ENCODE measurements at regions of chr4 and their contacts with region 1.

Region 1: DNA sequence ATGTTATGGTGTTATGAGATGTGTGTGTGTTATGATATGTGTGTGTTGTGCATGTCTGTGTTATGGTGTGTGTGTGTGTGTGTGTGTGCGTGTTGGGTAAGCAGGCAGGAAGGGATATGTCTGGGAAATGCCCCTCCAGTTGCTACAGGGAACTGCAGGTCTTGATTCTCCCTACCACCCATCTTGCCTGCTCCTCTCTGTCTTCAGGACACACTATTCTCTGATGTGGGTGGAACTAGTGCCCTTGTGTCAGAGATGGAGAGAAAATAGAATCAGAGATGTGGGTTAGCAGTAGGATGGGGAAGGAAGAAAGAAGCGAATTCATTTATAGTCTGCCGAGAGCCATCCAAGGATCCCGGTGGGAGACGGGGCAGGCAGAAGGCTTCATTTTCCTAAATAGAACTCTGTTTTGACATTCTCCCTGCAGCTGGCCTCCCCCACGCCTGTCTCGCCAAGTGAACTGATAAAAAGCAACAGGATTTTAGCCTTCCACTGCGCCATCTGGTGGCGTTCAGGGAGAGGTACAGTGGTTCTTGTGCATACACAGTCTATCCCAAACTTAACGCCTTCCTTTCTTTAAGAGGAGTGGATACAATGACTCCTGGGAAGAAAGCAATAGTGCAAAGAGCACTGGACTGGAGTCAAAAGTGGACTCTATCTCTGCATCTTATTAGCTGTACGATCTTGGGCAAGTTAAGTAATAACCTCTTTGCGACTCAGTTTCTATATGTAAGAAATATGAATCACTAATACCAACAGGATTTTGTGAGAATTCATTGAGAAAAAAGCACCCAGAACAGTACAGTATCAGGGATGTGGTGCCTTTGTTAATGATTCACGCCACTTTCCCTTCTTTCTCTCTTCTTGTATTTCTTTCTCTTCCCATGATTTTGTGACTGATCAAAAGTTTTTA is 14.1 kb upstream of the MGST2 start:
- DNase-seq: peak in 1 of 2 experiments; percentile 79
- H3K4me3 ChIP-seq: no peak overlapping the region
- H3K27ac ChIP-seq: no peak overlapping the region
- H3K4me1 ChIP-seq: no peaks in the 10 kb centered on the region; a peak in 1 of 7 replicates
- H3K27me3 ChIP-seq: no peaks in the 10 kb centered on the region; a peak in 1 of 7 replicates
- CTCF ChIP-seq: peak; percentile 64 to 92 (median 91)
- EP300 ChIP-seq: no peak
- POLR2A ChIP-seq: no peak
- RAD21 ChIP-seq: peak; percentile 77 to 82

Region 2: GRCh38 chr4:139331185-139331584 is 320.4 kb before region 1 on chr4:
- CTCF ChIA-PET with region 1: no interaction called
- POLR2A ChIA-PET with region 1: no interaction called
- DNase-seq: no peak
- H3K4me3 ChIP-seq: no peak overlapping the region
- H3K27ac ChIP-seq: no peak overlapping the region
- H3K4me1 ChIP-seq: peaks cover 0 to 6% (median 2%) of the 10 kb centered on the region in 4 experiments; a peak in 3 of 7 replicates
- H3K27me3 ChIP-seq: no peaks in the 10 kb centered on the region
- CTCF ChIP-seq: no peak
- EP300 ChIP-seq: no peak
- POLR2A ChIP-seq: no peak
- RAD21 ChIP-seq: no peak

Region 3: DNA sequence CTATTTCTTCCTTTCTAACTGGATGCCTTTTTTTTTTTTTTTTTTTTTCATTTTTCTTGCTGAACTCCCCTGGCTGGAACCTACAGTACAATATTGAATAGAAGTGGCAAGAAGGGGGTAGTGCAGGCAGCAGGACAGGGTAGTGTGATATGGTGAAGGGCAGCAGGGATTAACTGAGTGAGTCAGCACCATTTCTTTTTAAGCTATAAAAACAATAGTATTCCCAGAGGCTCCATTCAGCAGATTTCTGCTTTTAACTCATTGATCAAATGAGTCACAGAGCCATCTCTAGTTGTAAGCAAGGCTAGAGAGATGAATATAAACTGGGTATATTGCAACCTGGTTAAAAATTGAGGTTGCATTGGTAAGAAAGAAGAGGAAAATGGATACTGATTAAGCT is 41.9 kb before region 1 on chr4:
- CTCF ChIA-PET with region 1: interaction called, 318 read pairs
- POLR2A ChIA-PET with region 1: interaction called, 3 read pairs
- DNase-seq: no peak
- H3K4me3 ChIP-seq: no peak overlapping the region
- H3K27ac ChIP-seq: no peak overlapping the region
- H3K4me1 ChIP-seq: no peaks in the 10 kb centered on the region
- H3K27me3 ChIP-seq: peaks cover 0 to 2% (median 0%) of the 10 kb centered on the region in 4 experiments; a peak in 1 of 7 replicates
- CTCF ChIP-seq: no peak
- EP300 ChIP-seq: no peak
- POLR2A ChIP-seq: no peak
- RAD21 ChIP-seq: no peak

Region 4: GRCh38 chr4:139633661-139634060 is 17.9 kb before region 1 on chr4:
- CTCF ChIA-PET with region 1: interaction called, 264 read pairs
- POLR2A ChIA-PET with region 1: interaction called, 3 read pairs
- DNase-seq: peak in 1 of 2 experiments; percentile 63
- H3K4me3 ChIP-seq: peak overlapping the region in 2 of 4 experiments; percentile 23 to 45; a peak in 3 of 8 replicates
- H3K27ac ChIP-seq: no peak overlapping the region
- H3K4me1 ChIP-seq: peaks cover 0 to 5% (median under 1%) of the 10 kb centered on the region in 4 experiments; a peak in 3 of 7 replicates
- H3K27me3 ChIP-seq: peaks cover 4 to 27% (median 15%) of the 10 kb centered on the region in 4 experiments
- CTCF ChIP-seq: peak; percentile 40 to 68 (median 62)
- EP300 ChIP-seq: no peak
- POLR2A ChIP-seq: no peak
- RAD21 ChIP-seq: peak; percentile 83

Measured in H1 (cell line).